Astrocyte of the cerebellum (primary cell): ENCODE measurements at regions of chr3 and their contacts with region 1.

Region 1: GRCh38 chr3:111895079-111895478 is 36.0 kb downstream of the PHLDB2 start:
- DNase-seq: peak; percentile 18
- H3K4me3 ChIP-seq: no peak overlapping the region
- CTCF ChIP-seq: peak; percentile 50

Region 2: GRCh38 chr3:111932946-111933345 is 37.9 kb after region 1 on chr3:
- in situ Hi-C with region 1: loop called (anchors 5 kb)
- DNase-seq: no peak
- H3K4me3 ChIP-seq: no peak overlapping the region
- CTCF ChIP-seq: no peak